ENCODE measurements at regions of chr12 and their contacts with region 1.

Region 1: DNA sequence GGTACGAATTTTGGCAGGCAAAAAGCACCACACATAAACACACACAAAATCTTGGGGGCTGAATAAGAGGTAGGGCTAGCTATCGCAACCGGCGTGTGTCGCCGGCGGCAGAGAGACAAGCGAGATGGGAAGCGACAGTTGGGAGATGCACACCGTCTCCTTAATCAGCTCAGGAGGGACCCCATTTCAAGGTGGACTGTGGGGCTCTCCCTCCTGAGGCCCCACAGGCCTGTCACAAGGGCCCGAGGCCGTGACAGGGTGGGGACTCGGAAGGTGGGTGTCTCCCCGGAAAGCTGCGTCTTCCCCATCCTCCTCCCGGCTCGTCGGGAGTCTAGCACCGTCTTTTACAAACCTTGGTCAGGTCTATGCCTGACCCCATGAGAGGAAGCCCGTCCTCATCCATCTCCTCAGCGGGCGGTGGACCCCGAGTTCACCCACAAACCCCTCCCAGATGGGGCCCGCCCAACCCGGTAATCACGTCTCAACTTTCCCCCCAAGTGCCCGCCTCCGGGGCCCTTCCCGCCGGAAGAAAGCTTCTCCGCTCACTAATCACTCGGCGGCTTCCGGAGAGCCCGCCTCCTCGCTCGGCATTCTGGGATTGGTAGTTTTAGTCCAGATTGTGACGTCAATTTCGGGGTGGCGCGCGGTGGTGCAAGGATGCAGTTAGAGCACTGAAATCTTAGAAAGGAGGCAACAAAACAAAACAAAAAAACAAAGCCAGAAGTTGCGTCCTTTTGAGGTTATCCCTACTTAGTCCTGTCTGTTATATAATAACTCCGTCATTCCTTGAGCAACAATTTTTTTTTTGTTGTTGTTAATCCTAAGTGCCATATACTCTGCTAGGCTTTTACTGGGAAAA is at the start of gene WASHC3:
- DNase-seq: peak; percentile 98
- H3K4me3 ChIP-seq: peak within 1 kb of the TSS; percentile 68 to 88 (median 79)
- H3K27ac ChIP-seq: peak within 1 kb of the TSS; percentile 86 to 96 (median 92)
- H3K4me1 ChIP-seq: peaks cover 0 to 40% (median 11%) of the 10 kb centered on the region in 6 donors
- H3K27me3 ChIP-seq: no peaks in the 10 kb centered on the region
- CTCF ChIP-seq: peak in 6 of 11 experiments; percentile 7 to 45 (median 20)
- POLR2A ChIP-seq: peak in 2 of 3 donors; percentile 46 to 57
- total RNA-seq, gene WASHC3: 36.6 to 77.7 (median 49.6) TPM

Region 2: DNA sequence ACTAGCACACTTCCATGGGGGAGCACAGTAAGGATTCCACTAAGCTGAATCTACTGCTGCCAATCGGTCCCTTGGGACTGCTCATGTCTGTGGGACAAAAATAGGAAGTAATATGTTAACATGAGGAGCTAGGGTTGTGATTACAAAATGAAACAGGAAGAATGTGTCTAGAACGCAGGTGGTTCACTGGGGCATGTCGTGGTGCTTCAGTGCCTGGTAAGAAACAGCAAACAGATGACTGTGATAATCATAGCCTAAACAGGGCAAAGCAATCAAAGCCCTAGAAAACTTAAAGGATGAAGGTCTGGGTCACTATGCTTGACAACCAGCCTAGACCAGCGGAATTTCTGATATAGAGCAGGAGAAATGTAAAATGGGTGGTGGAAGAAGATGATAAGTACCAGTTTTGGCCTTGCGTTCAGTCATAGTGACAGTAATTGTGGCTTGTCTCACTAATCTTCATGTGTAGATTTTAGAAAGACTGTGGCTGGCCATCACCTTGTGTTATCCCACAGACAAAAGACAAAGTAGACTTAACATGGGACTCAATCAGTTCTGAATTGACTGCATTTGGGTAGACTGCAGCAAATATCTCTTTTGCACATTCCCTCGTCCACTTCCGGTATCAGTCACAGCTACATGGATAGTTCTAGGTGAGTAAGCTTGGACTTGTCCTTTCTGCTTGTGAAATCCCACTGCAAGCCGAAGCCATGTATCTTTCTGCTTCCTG is 51.4 kb before region 1 on chr12:
- intact Hi-C with region 1: no loop called
- DNase-seq: peak; percentile 78
- H3K4me3 ChIP-seq: peak overlapping the region in 1 of 8 donors; percentile 8
- H3K27ac ChIP-seq: peak overlapping the region in 7 of 8 donors; percentile 22 to 85 (median 72)
- H3K4me1 ChIP-seq: peaks cover 0 to 20% (median 14%) of the 10 kb centered on the region in 6 donors
- H3K27me3 ChIP-seq: no peaks in the 10 kb centered on the region
- CTCF ChIP-seq: no peak
- POLR2A ChIP-seq: no peak

Region 3: GRCh38 chr12:102119674-102120563 is 58.1 kb after region 1 on chr12 and contains the starts of genes NUP37 and PARPBP:
- intact Hi-C with region 1: loop called (anchors 10 kb)
- DNase-seq: peak; percentile 97
- H3K4me3 ChIP-seq: peak within 1 kb of the TSS; percentile 56 to 82 (median 70)
- H3K27ac ChIP-seq: peak within 1 kb of the TSS; percentile 78 to 91 (median 86)
- H3K4me1 ChIP-seq: peaks cover 10 to 41% (median 23%) of the 10 kb centered on the region in 6 donors
- H3K27me3 ChIP-seq: no peaks in the 10 kb centered on the region
- CTCF ChIP-seq: peak in 5 of 11 experiments; percentile 10 to 43 (median 37)
- POLR2A ChIP-seq: peak in 2 of 3 donors; percentile 41 to 72
- total RNA-seq, gene NUP37: 14.8 to 26.5 (median 19.2) TPM
- total RNA-seq, gene PARPBP: 2.9 to 7.7 (median 5.8) TPM

Region 4: GRCh38 chr12:102144221-102144620 is 82.4 kb after region 1 on chr12:
- intact Hi-C with region 1: no loop called
- DNase-seq: no peak
- H3K4me3 ChIP-seq: no peak overlapping the region
- H3K27ac ChIP-seq: no peak overlapping the region
- H3K4me1 ChIP-seq: no peaks in the 10 kb centered on the region
- H3K27me3 ChIP-seq: no peaks in the 10 kb centered on the region
- CTCF ChIP-seq: no peak
- POLR2A ChIP-seq: no peak